T-cell (primary cell): ENCODE measurements at regions of chr6 and their contacts with region 1.

Region 1: GRCh38 chr6:5905431-5906339 is 101.0 kb downstream of the NRN1 start:
- DNase-seq: no peak
- ATAC-seq: no peak
- H3K4me3 ChIP-seq: no peak overlapping the region
- H3K4me3 Mint-ChIP-seq: no peak overlapping the region
- H3K27ac ChIP-seq: no peak overlapping the region
- H3K27ac Mint-ChIP-seq: no peak overlapping the region
- H3K4me1 ChIP-seq: no peaks in the 10 kb centered on the region
- H3K4me1 Mint-ChIP-seq: no peaks in the 10 kb centered on the region
- H3K27me3 ChIP-seq: no peaks in the 10 kb centered on the region
- H3K27me3 Mint-ChIP-seq: no peaks in the 10 kb centered on the region

Region 2: GRCh38 chr6:5840509-5841390 is 64.9 kb before region 1 on chr6:
- CTCF ChIA-PET with region 1: no interaction called
- POLR2A ChIA-PET with region 1: no interaction called
- DNase-seq: no peak
- ATAC-seq: no peak
- H3K4me3 ChIP-seq: no peak overlapping the region
- H3K4me3 Mint-ChIP-seq: no peak overlapping the region
- H3K27ac ChIP-seq: no peak overlapping the region
- H3K27ac Mint-ChIP-seq: no peak overlapping the region
- H3K4me1 ChIP-seq: no peaks in the 10 kb centered on the region
- H3K4me1 Mint-ChIP-seq: no peaks in the 10 kb centered on the region
- H3K27me3 ChIP-seq: peaks cover 0 to 19% of the 10 kb centered on the region in 2 experiments
- H3K27me3 Mint-ChIP-seq: peaks cover 0 to 2% of the 10 kb centered on the region in 2 donors

Region 3: GRCh38 chr6:5930143-5930770 is 24.6 kb after region 1 on chr6:
- CTCF ChIA-PET with region 1: no interaction called
- POLR2A ChIA-PET with region 1: no interaction called
- DNase-seq: no peak
- ATAC-seq: no peak
- H3K4me3 ChIP-seq: no peak overlapping the region
- H3K4me3 Mint-ChIP-seq: no peak overlapping the region
- H3K27ac ChIP-seq: no peak overlapping the region
- H3K27ac Mint-ChIP-seq: no peak overlapping the region
- H3K4me1 ChIP-seq: peaks cover 0 to 3% of the 10 kb centered on the region in 2 experiments
- H3K4me1 Mint-ChIP-seq: peaks cover 0 to 5% (median 0%) of the 10 kb centered on the region in 3 donors
- H3K27me3 ChIP-seq: peaks cover 2 to 16% of the 10 kb centered on the region in 2 experiments
- H3K27me3 Mint-ChIP-seq: peaks cover 10 to 25% of the 10 kb centered on the region in 2 donors

Region 4: DNA sequence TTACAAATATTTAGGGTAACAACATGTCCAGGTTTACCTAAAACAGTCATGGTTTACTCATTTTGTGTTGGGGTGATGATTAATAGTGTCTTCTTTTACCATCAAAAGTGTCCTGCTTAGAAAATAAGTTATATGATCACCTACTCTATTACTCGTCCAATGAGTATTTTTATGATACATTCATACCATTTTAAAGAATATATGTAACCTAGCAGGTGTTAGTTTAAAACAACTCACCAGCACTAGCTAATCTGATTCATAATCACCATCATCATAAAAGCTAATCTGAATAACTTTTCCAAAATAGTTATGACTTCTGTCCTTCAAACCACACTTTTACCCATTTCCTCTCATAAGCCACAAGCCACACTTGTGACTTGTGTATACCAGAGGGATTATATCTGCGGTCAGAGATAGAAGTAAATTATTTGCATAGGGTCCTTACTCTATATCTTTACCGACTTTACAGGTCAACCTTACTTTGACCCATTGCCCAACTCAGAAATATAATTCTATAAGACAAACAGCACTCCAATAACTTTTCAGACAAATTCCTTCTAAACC is 134.3 kb after region 1 on chr6:
- CTCF ChIA-PET with region 1: no interaction called
- POLR2A ChIA-PET with region 1: interaction called in 1 of 2 experiments, 17 read pairs
- DNase-seq: no peak
- ATAC-seq: no peak
- H3K4me3 ChIP-seq: no peak overlapping the region
- H3K4me3 Mint-ChIP-seq: no peak overlapping the region
- H3K27ac ChIP-seq: no peak overlapping the region
- H3K27ac Mint-ChIP-seq: no peak overlapping the region
- H3K4me1 ChIP-seq: no peaks in the 10 kb centered on the region
- H3K4me1 Mint-ChIP-seq: no peaks in the 10 kb centered on the region
- H3K27me3 ChIP-seq: peaks cover 0 to 3% of the 10 kb centered on the region in 2 experiments
- H3K27me3 Mint-ChIP-seq: peaks cover 37 to 38% of the 10 kb centered on the region in 2 donors